ENCODE measurements at regions of chr4 and their contacts with region 1.

Region 1: GRCh38 chr4:151362404-151363164 is 37.2 kb upstream of the SH3D19 start:
- DNase-seq: peak; percentile 73 to 83 (median 77)
- ATAC-seq: peak; percentile 100
- H3K4me3 ChIP-seq: no peak overlapping the region
- H3K27ac ChIP-seq: no peak overlapping the region
- H3K4me1 ChIP-seq: peaks cover 0 to 4% (median 0%) of the 10 kb centered on the region in 4 donors
- H3K27me3 ChIP-seq: no peaks in the 10 kb centered on the region
- CTCF ChIP-seq: peak; percentile 94 to 98 (median 96)
- POLR2A ChIP-seq: no peak

Region 2: GRCh38 chr4:151117371-151117962 is 245.1 kb before region 1 on chr4:
- intact Hi-C with region 1: loop called in 1 of 2 experiments (anchors 10 kb)
- DNase-seq: peak in 2 of 3 donors; percentile 33 to 60
- ATAC-seq: peak; percentile 97 to 99 (median 98)
- H3K4me3 ChIP-seq: no peak overlapping the region
- H3K27ac ChIP-seq: no peak overlapping the region
- H3K4me1 ChIP-seq: peaks cover 0 to 9% (median 0%) of the 10 kb centered on the region in 4 donors
- H3K27me3 ChIP-seq: no peaks in the 10 kb centered on the region
- CTCF ChIP-seq: peak; percentile 72 to 88 (median 84)
- POLR2A ChIP-seq: no peak

Region 3: GRCh38 chr4:151540728-151541422 is 178.3 kb after region 1 on chr4:
- intact Hi-C with region 1: no loop called
- DNase-seq: no peak
- ATAC-seq: no peak
- H3K4me3 ChIP-seq: no peak overlapping the region
- H3K27ac ChIP-seq: no peak overlapping the region
- H3K4me1 ChIP-seq: no peaks in the 10 kb centered on the region
- H3K27me3 ChIP-seq: no peaks in the 10 kb centered on the region
- CTCF ChIP-seq: no peak
- POLR2A ChIP-seq: no peak

Measured in right lobe of liver (tissue), 6 donors.